ENCODE measurements at regions of chr3 and their contacts with region 1.

Region 1: DNA sequence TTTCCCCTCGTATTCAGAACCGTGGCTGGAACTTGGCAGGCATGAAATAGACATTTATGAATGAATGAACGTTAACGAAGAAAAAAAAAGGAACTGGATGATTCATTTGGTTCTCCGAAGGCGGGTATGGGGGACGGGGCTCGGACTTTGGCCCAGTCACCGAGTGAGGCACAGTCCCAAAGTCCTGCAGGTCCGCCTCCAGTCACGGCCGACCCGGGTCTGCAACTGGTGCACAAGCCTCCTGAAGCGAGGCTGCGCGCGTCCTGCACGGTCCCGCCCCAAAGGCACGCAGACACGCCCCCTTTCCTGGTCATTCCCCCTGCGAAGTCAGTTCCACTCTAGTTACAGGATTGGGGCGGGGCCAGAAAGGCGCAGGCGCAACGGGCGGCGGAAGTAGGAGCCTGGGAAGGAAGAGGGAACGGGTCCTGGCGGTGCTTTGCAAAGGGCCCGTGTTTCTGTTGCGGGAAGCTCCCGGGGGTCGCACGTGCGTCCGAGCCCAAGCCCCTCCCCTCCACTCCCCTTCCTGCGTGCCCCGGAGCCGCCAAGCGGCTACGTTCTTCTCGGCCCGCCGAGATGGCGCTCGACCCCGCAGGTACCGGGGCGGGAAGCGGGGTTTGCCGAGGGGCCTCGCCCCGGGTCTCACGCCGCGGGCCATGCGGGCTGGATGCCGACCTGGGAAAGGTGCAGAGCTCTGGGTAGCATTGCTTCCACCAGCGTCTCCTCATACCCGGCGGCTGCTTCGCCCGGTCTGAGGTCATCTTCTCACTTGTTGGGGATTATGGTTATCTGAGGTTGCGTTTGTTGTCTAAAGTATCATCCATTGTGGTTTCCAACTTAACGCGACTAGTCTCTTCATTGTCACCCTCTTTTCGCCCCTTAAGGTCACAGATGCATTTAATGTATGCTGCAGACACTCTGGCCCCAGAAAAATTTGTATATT is at the start of gene CMC1:
- DNase-seq: peak; percentile 97
- H3K4me3 Mint-ChIP-seq: peak within 1 kb of the TSS; percentile 88
- H3K27ac Mint-ChIP-seq: peak within 1 kb of the TSS; percentile 90
- H3K4me1 Mint-ChIP-seq: peaks cover 45% of the 10 kb centered on the region
- H3K27me3 Mint-ChIP-seq: no peaks in the 10 kb centered on the region
- total RNA-seq, gene CMC1: 27.6 to 28.6 TPM

Region 2: DNA sequence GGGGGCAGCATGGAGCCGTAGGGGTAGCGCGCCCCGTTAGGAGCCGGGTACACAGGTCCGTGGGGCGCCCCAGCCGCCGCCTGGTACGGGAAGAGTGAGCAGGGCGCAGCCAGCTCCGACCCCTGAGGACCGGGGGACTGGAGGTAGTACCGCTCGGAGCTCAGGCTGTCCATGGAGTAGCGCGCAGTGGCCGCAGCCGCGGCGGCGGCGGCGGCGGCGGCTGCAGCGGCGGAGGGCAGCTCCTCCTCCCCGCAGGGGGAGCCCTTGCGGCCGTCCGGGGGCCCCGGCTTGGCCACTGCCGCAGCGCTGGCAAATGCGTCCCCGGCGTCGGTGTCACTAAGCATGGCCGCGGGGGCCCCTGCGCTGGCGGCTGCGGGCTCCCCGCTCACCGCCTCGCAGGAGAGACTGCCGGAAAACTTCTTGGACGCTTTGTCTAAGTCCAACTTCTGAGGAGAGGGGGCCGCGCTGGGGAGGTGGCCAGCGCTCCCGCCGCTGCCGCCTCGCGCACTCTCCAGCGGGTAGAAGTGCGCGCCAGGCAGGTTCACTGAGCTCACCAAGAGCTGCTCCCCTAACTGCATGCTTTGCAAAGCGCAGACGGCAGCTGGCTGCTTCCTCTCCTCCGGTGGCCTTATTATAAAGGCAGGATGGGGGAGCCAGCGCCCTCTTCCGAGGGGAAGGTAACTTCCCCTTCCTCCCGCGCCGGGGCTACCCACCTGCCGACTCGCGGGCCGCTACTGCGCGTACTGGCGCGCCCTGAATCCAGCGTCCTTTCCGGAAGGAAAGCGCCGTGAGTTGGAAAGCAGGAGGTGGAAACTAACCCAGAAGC is 519.6 kb before region 1 on chr3 and contains the start of gene EOMES:
- CTCF ChIA-PET with region 1: no interaction called
- intact Hi-C with region 1: loop called (anchors 1 kb)
- DNase-seq: peak; percentile 79
- H3K4me3 Mint-ChIP-seq: peak within 1 kb of the TSS; percentile 75
- H3K27ac Mint-ChIP-seq: no peak within 1 kb of the TSS
- H3K4me1 Mint-ChIP-seq: peaks cover 21% of the 10 kb centered on the region
- H3K27me3 Mint-ChIP-seq: peaks cover 68% of the 10 kb centered on the region
- total RNA-seq, gene EOMES: 0.12 to 0.14 TPM

Region 3: GRCh38 chr3:27752926-27753325 is 488.6 kb before region 1 on chr3:
- CTCF ChIA-PET with region 1: no interaction called
- intact Hi-C with region 1: no loop called
- DNase-seq: no peak
- H3K4me3 Mint-ChIP-seq: no peak overlapping the region
- H3K27ac Mint-ChIP-seq: no peak overlapping the region
- H3K4me1 Mint-ChIP-seq: peaks cover 11% of the 10 kb centered on the region
- H3K27me3 Mint-ChIP-seq: no peaks in the 10 kb centered on the region

Region 4: GRCh38 chr3:27900316-27900715 is 341.2 kb before region 1 on chr3:
- CTCF ChIA-PET with region 1: no interaction called
- intact Hi-C with region 1: loop called (anchors 2 kb)
- DNase-seq: peak; percentile 34
- H3K4me3 Mint-ChIP-seq: no peak overlapping the region
- H3K27ac Mint-ChIP-seq: no peak overlapping the region
- H3K4me1 Mint-ChIP-seq: peaks cover 38% of the 10 kb centered on the region
- H3K27me3 Mint-ChIP-seq: no peaks in the 10 kb centered on the region

Region 5: GRCh38 chr3:28171962-28172361 is 69.5 kb before region 1 on chr3:
- CTCF ChIA-PET with region 1: no interaction called
- intact Hi-C with region 1: loop called (anchors 1 kb)
- DNase-seq: no peak
- H3K4me3 Mint-ChIP-seq: peak overlapping the region; percentile 42
- H3K27ac Mint-ChIP-seq: peak overlapping the region; percentile 85
- H3K4me1 Mint-ChIP-seq: peaks cover 11% of the 10 kb centered on the region
- H3K27me3 Mint-ChIP-seq: no peaks in the 10 kb centered on the region

Region 6: GRCh38 chr3:28348629-28349483 is 107.4 kb after region 1 on chr3 and contains the starts of genes AZI2 and ZCWPW2:
- CTCF ChIA-PET with region 1: no interaction called
- intact Hi-C with region 1: loop called (anchors 1 kb)
- DNase-seq: peak; percentile 93
- H3K4me3 Mint-ChIP-seq: peak within 1 kb of the TSS; percentile 88
- H3K27ac Mint-ChIP-seq: peak within 1 kb of the TSS; percentile 92
- H3K4me1 Mint-ChIP-seq: peaks cover 36% of the 10 kb centered on the region
- H3K27me3 Mint-ChIP-seq: no peaks in the 10 kb centered on the region
- total RNA-seq, gene AZI2: 31.5 to 39.4 TPM
- total RNA-seq, gene ZCWPW2: 0.17 TPM in 1 of 2 experiments, not detected in the other

Measured in activated naive CD4-positive, alpha-beta T cell treated with anti-CD3 and anti-CD28 coated beads for 36 hours (primary cell).